ENCODE measurements at regions of chr6 and their contacts with region 1.

Region 1: GRCh38 chr6:53492860-53493634 is 51.9 kb downstream of the GCLC start:
- DNase-seq: peak; percentile 81
- H3K4me3 ChIP-seq: peak overlapping the region; percentile 50
- H3K27ac ChIP-seq: peak overlapping the region; percentile 43
- H3K4me1 ChIP-seq: peaks cover 31% of the 10 kb centered on the region
- H3K27me3 ChIP-seq: no peaks in the 10 kb centered on the region

Region 2: DNA sequence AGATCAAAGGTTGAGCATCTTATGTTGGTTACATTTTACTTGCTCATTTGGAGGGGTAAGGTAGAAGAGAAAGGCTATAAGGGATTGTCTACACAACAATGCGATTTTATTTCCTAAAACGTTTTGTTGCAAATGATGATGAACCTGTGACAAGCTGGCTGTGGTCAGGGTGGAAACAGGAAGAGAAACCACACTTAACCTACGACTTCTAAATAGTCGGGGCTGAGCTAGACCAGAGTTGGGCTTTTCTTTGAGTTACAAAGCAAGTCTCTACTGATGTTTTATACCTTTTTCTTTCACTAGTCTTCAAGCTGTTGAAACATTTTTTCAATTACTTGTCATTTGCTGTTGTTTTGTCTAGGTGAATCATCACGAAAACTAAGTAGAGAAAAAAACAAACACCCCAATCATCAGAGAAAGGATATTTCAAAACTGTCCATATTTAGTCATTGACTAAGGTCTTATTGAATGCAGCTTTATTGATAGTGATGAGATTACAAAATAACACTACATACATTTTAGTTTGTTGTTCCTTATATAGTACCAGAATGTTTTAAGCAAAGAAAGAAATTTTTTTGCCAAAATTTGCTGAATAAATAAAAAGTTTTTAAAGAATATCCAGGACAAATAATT is 154.5 kb after region 1 on chr6:
- in situ Hi-C with region 1: loop called (anchors 10 kb)
- DNase-seq: peak; percentile 22
- H3K4me3 ChIP-seq: no peak overlapping the region
- H3K27ac ChIP-seq: no peak overlapping the region
- H3K4me1 ChIP-seq: no peaks in the 10 kb centered on the region
- H3K27me3 ChIP-seq: 0 out of 2 replicates have a peak, but pooled peaks cover 5% of the 10 kb centered on the region

Region 3: DNA sequence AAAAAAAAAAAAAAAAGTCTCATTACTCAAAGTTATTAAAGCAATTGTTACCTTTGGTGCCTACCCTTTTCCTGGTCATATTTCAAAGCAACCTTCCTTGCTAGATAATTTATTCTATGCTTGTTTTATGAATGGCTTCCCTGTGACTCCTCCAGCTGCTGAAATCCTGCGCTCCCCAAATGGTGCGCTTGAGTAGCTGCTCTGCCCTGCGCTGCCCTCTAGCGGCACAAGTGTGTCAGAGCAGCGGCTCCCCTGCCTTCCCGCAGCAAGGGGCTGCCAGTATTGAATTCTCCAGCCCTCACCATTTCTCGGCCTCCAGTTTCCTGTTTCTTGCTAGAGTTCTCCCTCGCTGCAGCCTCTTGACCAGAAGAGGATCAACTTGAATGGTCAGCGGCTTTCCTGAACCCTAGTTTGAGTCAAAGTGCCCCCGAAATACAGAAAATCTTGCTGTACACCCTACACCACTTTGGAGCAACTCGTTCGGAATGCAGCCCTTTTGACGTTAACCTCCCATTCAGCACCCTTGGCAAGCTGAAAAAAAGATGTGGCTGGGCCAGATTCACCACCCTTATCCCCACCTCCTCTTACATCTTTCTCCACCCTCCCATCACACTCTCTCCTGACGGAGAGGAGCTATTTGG is 232.9 kb after region 1 on chr6:
- in situ Hi-C with region 1: loop called (anchors 10 kb)
- DNase-seq: peak; percentile 85
- H3K4me3 ChIP-seq: no peak overlapping the region
- H3K27ac ChIP-seq: no peak overlapping the region
- H3K4me1 ChIP-seq: peaks cover 14% of the 10 kb centered on the region
- H3K27me3 ChIP-seq: no peaks in the 10 kb centered on the region